ENCODE measurements at regions of chr22 and their contacts with region 1.

Region 1: DNA sequence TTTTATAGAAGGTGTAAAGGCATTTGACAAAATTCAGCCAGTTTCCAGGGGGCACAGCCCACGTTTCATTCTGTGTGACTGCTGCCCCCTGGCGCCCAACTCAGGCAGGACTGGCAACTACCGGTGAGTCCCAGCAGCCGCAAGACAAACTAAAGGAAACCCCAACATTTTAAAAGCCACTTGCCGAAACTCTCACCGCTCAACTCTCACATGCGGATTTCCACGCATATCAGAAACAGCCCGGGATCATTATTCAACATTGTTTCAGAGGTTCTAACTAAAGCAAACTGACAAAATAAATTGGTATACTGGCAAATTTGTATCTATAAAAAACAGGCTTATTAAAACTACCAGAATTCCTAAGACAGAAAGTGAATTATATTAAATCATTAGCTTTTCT is 48.2 kb downstream of the MORC2 start:
- DNase-seq: peak; percentile 66 to 91 (median 86)
- ATAC-seq: peak; percentile 77
- H3K4me3 ChIP-seq: no peak overlapping the region
- H3K4me3 Mint-ChIP-seq: peak overlapping the region; percentile 64
- H3K27ac ChIP-seq: no peak overlapping the region
- H3K27ac Mint-ChIP-seq: peak overlapping the region; percentile 55
- H3K4me1 ChIP-seq: peaks cover 26% of the 10 kb centered on the region
- H3K4me1 Mint-ChIP-seq: peaks cover 31% of the 10 kb centered on the region
- H3K27me3 ChIP-seq: no peaks in the 10 kb centered on the region
- H3K27me3 Mint-ChIP-seq: no peaks in the 10 kb centered on the region
- CTCF ChIP-seq: peak; percentile 96

Region 2: GRCh38 chr22:30705710-30706651 is 214.4 kb before region 1 on chr22:
- CTCF ChIA-PET with region 1: no interaction called
- POLR2A ChIA-PET with region 1: no interaction called
- intact Hi-C with region 1: no loop called
- DNase-seq: peak in 1 of 9 experiments; percentile 50
- ATAC-seq: peak; percentile 36
- H3K4me3 ChIP-seq: no peak overlapping the region
- H3K4me3 Mint-ChIP-seq: no peak overlapping the region
- H3K27ac ChIP-seq: no peak overlapping the region
- H3K27ac Mint-ChIP-seq: peak overlapping the region; percentile 9
- H3K4me1 ChIP-seq: no peaks in the 10 kb centered on the region
- H3K4me1 Mint-ChIP-seq: peaks cover 8% of the 10 kb centered on the region
- H3K27me3 ChIP-seq: peaks cover 0 to 3% of the 10 kb centered on the region in 2 experiments
- H3K27me3 Mint-ChIP-seq: no peaks in the 10 kb centered on the region
- CTCF ChIP-seq: no peak

Region 3: DNA sequence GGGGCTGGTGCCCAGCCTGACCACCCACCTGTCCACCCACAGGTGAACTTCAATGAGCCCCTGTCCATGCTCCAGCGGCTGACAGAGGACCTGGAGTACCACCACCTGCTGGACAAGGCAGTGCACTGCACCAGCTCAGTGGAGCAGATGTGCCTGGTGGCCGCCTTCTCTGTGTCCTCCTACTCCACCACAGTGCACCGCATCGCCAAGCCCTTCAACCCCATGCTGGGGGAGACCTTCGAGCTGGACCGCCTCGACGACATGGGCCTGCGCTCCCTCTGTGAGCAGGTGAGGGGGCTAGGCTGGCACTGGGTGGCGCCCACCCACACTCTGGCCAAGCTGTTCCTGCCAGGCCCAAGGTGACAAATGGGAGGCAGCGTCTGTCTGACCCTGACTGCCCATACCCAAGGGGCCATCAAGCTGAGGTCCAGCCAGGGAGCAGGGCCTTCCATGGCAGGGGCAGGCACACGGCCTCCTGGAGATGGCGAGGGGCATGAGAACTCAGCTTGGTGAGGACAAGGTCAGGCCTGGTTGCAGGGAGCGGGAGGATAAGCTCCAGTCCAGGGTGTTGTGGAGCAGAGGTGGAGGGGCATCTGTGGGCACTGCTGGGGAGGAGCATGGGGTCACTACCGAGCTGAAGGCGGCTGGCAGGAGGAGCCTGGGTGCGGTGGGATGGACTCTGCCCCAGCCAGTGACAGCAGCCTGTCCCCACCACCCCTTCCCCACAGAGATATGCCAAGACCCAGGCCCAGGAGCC is 29.5 kb before region 1 on chr22:
- CTCF ChIA-PET with region 1: interaction called, 8 read pairs
- POLR2A ChIA-PET with region 1: no interaction called
- intact Hi-C with region 1: loop called in 1 of 2 experiments (anchors 2 kb)
- DNase-seq: peak in 5 of 9 experiments; percentile 16 to 43 (median 30)
- ATAC-seq: peak; percentile 70
- H3K4me3 ChIP-seq: no peak overlapping the region
- H3K4me3 Mint-ChIP-seq: no peak overlapping the region
- H3K27ac ChIP-seq: no peak overlapping the region
- H3K27ac Mint-ChIP-seq: no peak overlapping the region
- H3K4me1 ChIP-seq: peaks cover 23% of the 10 kb centered on the region
- H3K4me1 Mint-ChIP-seq: peaks cover 23% of the 10 kb centered on the region
- H3K27me3 ChIP-seq: no peaks in the 10 kb centered on the region
- H3K27me3 Mint-ChIP-seq: no peaks in the 10 kb centered on the region
- CTCF ChIP-seq: peak; percentile 65

Region 4: DNA sequence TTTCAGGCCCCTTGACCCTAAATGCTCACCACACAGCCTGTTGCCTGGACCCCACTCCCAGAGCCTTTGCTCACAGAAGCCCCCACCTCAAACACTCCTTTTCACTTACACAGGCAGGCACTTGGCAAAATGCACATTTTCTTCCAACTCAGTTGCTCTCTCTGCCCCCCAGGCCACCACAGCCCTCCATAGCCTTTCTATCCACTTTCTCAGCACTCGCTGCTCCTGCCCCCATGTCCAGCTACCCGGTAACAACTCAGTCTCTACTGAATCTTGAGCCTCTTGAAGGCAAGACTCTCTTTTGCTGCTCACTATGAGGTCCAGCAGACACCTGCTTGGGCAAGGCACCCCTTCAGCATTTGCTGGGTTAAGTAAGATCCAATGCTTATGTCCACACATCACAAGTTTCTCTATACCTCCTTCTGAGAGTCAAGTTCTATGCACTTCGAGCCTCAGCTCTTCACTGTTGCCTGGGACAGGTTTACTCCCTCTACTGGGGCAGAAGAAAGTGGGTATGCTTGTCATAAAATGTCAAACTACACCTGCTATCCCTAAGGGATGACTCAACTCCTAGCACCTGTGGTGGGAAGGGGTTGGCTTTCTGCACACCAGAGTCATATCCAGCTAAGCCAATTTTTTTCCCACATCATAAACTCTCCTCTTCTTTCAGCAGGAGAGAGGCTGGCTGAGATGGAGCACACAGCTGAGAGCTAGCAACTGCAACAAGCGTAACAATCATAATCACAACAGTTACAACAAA is 11.3 kb after region 1 on chr22:
- CTCF ChIA-PET with region 1: interaction called, 29 read pairs
- POLR2A ChIA-PET with region 1: interaction called, 3 read pairs
- intact Hi-C with region 1: no loop called
- DNase-seq: no peak
- ATAC-seq: no peak
- H3K4me3 ChIP-seq: no peak overlapping the region
- H3K4me3 Mint-ChIP-seq: no peak overlapping the region
- H3K27ac ChIP-seq: peak overlapping the region; percentile 8 to 31
- H3K27ac Mint-ChIP-seq: peak overlapping the region; percentile 81
- H3K4me1 ChIP-seq: peaks cover 18% of the 10 kb centered on the region
- H3K4me1 Mint-ChIP-seq: peaks cover 43% of the 10 kb centered on the region
- H3K27me3 ChIP-seq: no peaks in the 10 kb centered on the region
- H3K27me3 Mint-ChIP-seq: no peaks in the 10 kb centered on the region
- CTCF ChIP-seq: no peak

Region 5: GRCh38 chr22:30947816-30948454 is 27.5 kb after region 1 on chr22:
- CTCF ChIA-PET with region 1: interaction called, 13 read pairs
- POLR2A ChIA-PET with region 1: interaction called, 3 read pairs
- intact Hi-C with region 1: loop called in 1 of 2 experiments (anchors 2 kb)
- DNase-seq: peak in 2 of 9 experiments; percentile 52 to 68
- ATAC-seq: peak; percentile 54
- H3K4me3 ChIP-seq: no peak overlapping the region
- H3K4me3 Mint-ChIP-seq: no peak overlapping the region
- H3K27ac ChIP-seq: no peak overlapping the region
- H3K27ac Mint-ChIP-seq: no peak overlapping the region
- H3K4me1 ChIP-seq: peaks cover 58% of the 10 kb centered on the region
- H3K4me1 Mint-ChIP-seq: peaks cover 64% of the 10 kb centered on the region
- H3K27me3 ChIP-seq: no peaks in the 10 kb centered on the region
- H3K27me3 Mint-ChIP-seq: no peaks in the 10 kb centered on the region
- CTCF ChIP-seq: peak; percentile 60

Measured in CD8-positive, alpha-beta T cell (primary cell).